BJ (cell line): ENCODE measurements at regions of chr1 and their contacts with region 1.

Region 1: GRCh38 chr1:222579316-222579715 is 10.4 kb downstream of the TAF1A start:
- DNase-seq: no peak
- H3K4me3 ChIP-seq: no peak overlapping the region
- H3K27me3 ChIP-seq: no peaks in the 10 kb centered on the region
- CTCF ChIP-seq: no peak

Region 2: DNA sequence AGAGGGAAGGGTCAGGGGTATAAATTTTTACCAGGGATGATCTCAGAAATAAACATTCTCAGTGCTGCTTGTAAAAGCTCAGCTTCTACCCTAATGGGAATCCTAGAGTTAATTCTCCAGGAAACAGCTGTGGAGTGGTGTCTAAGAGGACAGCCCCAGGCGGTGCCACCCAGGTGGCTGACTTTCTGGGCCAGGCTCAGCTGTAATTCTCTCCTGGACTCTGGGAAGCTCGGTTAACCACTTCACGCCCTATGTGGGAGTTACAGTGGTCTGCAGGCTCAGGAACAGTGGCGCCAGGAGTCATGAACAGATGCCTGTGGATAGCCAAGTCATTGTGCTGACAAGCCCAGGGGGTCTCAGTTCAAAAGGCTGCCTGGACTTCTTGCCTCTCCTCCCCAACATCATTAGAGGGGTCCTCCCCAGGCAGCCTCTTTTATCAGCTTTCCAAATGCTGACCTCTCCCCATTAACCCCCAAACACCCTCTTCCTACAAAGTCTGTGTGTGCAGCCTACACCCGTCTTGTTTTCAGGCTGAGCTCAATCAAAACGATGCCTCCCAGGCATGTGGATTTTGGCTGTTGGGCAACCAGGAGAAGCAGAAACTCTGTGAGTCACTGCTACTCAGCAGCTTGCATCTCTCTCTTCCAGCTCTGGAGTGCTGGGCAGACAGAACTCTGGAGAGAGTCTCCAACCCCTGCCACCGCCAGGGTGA is 32.6 kb before region 1 on chr1:
- CTCF ChIA-PET with region 1: no interaction called
- POLR2A ChIA-PET with region 1: no interaction called
- DNase-seq: peak; percentile 62
- H3K4me3 ChIP-seq: peak overlapping the region; percentile 2; the same call in 1 of the 2 replicates
- H3K27me3 ChIP-seq: no peaks in the 10 kb centered on the region; the same call in 1 of the 2 replicates
- CTCF ChIP-seq: no peak

Region 3: GRCh38 chr1:222606757-222607156 is 27.4 kb after region 1 on chr1:
- CTCF ChIA-PET with region 1: no interaction called
- POLR2A ChIA-PET with region 1: interaction called, 12 read pairs
- DNase-seq: no peak
- H3K4me3 ChIP-seq: no peak overlapping the region
- H3K27me3 ChIP-seq: no peaks in the 10 kb centered on the region; the same call in 1 of the 2 replicates
- CTCF ChIP-seq: no peak

Region 4: DNA sequence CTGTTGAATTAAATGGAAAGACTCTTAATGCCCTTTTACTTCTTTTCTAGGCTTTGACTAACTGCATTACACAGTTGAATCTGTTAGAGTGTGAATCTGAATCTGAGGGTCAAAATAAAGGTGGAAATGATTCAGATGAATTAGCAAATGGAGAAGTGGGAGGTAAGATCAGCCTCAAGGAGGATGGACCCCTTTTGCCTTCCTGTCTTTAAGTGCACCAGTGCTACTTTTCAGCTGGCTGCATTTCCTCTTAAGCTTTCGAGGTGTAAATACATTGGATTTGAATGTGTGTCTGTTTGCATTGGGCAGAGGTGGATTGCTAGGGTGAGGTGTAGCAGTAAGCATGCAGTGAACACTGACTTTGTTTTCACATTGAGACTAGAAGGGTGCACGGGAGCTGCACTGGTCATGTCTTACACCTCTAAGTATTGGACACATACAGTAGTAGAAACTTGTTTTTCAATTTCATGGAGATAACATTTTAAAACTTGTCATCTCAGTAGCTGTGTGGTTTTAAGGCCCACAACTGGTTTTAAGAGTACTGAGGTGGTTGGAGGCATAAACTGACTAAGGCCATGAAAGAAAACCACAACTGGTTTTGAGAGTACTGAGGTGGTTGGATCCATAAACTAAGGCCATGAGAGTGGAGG is 74.0 kb after region 1 on chr1:
- CTCF ChIA-PET with region 1: no interaction called
- POLR2A ChIA-PET with region 1: no interaction called
- DNase-seq: no peak
- H3K4me3 ChIP-seq: no peak overlapping the region
- H3K27me3 ChIP-seq: no peaks in the 10 kb centered on the region
- CTCF ChIP-seq: no peak